Testis (tissue), 5 donors: ENCODE measurements at regions of chr1 and their contacts with region 1.

Region 1: GRCh38 chr1:180533266-180533987 is 25.3 kb upstream of the OVAAL start:
- DNase-seq: peak; percentile 87
- H3K4me3 ChIP-seq: no peak overlapping the region
- H3K27ac ChIP-seq: no peak overlapping the region
- H3K4me1 ChIP-seq: peaks cover 8% of the 10 kb centered on the region
- H3K27me3 ChIP-seq: no peaks in the 10 kb centered on the region
- CTCF ChIP-seq: peak; percentile 53 to 80 (median 68)
- POLR2A ChIP-seq: no peak

Region 2: GRCh38 chr1:180851995-180852887 is 318.8 kb after region 1 on chr1:
- intact Hi-C with region 1: loop called (anchors 10 kb)
- DNase-seq: no peak
- H3K4me3 ChIP-seq: no peak overlapping the region
- H3K27ac ChIP-seq: no peak overlapping the region
- H3K4me1 ChIP-seq: peaks cover 3% of the 10 kb centered on the region
- H3K27me3 ChIP-seq: no peaks in the 10 kb centered on the region
- CTCF ChIP-seq: no peak
- POLR2A ChIP-seq: no peak